ENCODE measurements at regions of chr17 and their contacts with region 1.

Region 1: DNA sequence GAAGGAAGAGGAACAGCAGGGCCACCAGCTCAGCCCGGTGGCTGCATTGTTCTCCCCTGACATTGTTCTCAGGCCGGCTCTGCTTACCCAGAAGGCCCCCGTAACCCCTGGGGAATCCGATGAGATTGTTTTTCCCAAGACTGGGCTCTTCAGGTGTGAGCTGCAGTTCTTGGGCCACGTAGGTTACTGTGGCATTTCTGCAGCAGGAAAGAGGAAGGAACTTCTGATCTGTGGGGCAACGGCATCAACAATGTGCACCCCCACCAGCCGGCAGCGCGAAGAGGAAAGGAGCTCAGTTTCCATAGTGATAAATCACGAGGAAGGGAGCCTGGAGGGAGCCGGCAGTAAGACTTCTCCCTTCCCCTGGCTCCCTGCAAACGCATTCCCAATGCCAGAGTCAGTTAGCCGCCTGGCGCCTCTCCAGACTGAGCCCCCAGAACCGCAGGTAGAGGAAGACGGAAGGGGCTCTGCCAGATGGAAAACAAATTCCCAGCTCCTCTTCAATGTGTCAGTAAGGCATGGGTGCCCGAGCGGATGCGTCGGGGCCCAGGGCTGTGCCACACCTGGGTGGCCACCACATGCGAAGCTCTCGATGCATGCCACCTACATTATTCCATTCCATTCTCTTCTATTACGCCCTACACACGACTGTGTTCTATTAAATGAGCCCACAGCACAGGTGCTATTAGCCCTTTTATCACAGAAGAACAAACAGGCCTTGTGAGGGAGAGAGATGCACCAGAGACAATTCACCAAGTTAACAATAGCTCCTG is 21.5 kb upstream of the PECAM1 start:
- DNase-seq: peak; percentile 52 to 86 (median 81)
- ATAC-seq: peak; percentile 59 to 78
- H3K4me3 ChIP-seq: peak overlapping the region; percentile 23
- H3K27ac ChIP-seq: peak overlapping the region; percentile 21
- H3K4me1 ChIP-seq: no peaks in the 10 kb centered on the region
- H3K27me3 ChIP-seq: no peaks in the 10 kb centered on the region

Region 2: DNA sequence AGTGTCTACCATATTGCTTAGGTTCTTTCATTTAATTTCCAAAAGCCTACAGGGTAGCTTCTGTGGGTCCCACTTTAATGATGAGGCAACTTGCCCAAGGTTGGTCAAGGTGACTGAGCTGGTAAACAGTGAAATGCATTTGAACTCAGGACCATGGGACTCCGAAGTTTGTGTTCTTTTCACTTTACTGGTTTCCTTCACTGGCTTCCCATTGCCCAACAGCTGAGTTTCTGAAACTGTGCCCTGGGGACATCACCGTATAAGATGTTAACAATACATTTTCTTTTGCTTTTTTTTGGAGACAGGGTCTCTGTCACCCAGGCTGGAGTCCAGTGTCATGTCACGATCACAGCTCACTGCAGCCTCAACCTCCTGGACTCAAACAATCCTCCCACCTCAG is 115.4 kb before region 1 on chr17:
- intact Hi-C with region 1: no loop called
- DNase-seq: no peak
- ATAC-seq: no peak
- H3K4me3 ChIP-seq: no peak overlapping the region
- H3K27ac ChIP-seq: no peak overlapping the region
- H3K4me1 ChIP-seq: no peaks in the 10 kb centered on the region
- H3K27me3 ChIP-seq: no peaks in the 10 kb centered on the region

Region 3: DNA sequence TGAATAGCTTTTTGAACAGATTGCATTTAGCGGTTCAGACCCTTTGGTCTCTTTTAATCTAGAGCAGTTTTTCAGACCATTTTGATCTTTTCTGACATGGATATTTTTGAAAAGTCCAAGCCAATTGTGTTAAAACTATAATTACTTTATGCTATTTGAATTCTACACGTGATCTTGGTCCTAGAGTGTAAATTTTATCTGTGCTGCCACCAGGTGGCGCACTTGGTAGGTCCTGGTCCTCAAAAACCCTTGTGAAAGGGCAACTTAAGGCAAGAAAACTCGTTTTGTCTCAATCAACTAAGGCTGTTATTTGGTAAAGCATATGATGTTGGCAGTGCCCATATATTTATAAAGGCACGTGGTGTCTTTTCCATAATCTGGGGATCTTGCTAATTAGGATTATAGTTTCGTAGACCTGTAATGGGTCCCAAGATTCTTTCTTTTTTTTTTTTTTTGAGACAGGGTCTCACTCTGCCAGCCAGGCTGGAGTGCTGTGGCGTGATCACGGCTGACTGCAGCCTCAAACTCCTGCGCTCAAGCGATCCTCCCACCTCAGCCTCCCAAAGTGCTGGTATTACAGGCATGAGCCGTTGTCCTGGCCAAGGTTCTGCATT is 105.2 kb before region 1 on chr17:
- intact Hi-C with region 1: loop called (anchors 5 kb)
- DNase-seq: peak; percentile 71 to 88 (median 80)
- ATAC-seq: peak; percentile 38 to 57
- H3K4me3 ChIP-seq: no peak overlapping the region
- H3K27ac ChIP-seq: no peak overlapping the region
- H3K4me1 ChIP-seq: no peaks in the 10 kb centered on the region
- H3K27me3 ChIP-seq: no peaks in the 10 kb centered on the region

Region 4: DNA sequence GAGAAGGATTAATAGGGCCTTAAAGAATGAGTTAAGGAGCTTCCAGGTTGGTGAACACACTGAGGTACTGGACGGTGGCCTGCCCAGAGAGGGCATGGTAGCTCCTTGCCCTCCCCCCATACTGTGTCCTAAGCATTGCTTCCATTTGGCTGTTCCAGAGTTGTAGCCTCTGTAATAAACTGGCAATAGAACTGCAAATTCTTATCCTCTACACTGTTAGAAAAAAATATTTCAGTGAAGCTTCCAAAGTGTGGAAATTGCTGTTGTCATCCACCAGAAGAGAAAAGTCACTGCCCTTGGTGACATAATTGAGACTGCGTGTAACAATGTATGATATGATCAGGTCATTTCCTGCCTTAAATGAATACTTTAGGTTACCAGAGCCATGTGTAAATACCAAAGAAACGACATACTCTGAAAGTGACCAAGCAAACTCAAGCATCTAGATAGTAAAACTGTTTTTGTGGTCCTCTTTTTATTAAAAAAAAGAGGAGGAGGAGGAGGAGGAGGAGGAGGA is 160.5 kb after region 1 on chr17:
- intact Hi-C with region 1: no loop called
- DNase-seq: no peak
- ATAC-seq: peak; percentile 75 to 79
- H3K4me3 ChIP-seq: no peak overlapping the region
- H3K27ac ChIP-seq: no peak overlapping the region
- H3K4me1 ChIP-seq: no peaks in the 10 kb centered on the region
- H3K27me3 ChIP-seq: no peaks in the 10 kb centered on the region

Measured in right cardiac atrium (tissue), 5 donors.